Activated CD4-positive, alpha-beta T cell treated with anti-CD3 and anti-CD28 coated beads for 36 hours (primary cell): ENCODE measurements at regions of chr5 and their contacts with region 1.

Region 1: GRCh38 chr5:95961617-95962474 is at the start of gene ELL2:
- DNase-seq: peak; percentile 99
- ATAC-seq: peak; percentile 89
- H3K4me3 Mint-ChIP-seq: peak within 1 kb of the TSS; percentile 97
- H3K27ac Mint-ChIP-seq: peak within 1 kb of the TSS; percentile 96
- H3K4me1 Mint-ChIP-seq: peaks cover 51% of the 10 kb centered on the region
- H3K27me3 Mint-ChIP-seq: peaks cover 3% of the 10 kb centered on the region
- total RNA-seq, gene ELL2: 87.6 to 131 TPM

Region 2: DNA sequence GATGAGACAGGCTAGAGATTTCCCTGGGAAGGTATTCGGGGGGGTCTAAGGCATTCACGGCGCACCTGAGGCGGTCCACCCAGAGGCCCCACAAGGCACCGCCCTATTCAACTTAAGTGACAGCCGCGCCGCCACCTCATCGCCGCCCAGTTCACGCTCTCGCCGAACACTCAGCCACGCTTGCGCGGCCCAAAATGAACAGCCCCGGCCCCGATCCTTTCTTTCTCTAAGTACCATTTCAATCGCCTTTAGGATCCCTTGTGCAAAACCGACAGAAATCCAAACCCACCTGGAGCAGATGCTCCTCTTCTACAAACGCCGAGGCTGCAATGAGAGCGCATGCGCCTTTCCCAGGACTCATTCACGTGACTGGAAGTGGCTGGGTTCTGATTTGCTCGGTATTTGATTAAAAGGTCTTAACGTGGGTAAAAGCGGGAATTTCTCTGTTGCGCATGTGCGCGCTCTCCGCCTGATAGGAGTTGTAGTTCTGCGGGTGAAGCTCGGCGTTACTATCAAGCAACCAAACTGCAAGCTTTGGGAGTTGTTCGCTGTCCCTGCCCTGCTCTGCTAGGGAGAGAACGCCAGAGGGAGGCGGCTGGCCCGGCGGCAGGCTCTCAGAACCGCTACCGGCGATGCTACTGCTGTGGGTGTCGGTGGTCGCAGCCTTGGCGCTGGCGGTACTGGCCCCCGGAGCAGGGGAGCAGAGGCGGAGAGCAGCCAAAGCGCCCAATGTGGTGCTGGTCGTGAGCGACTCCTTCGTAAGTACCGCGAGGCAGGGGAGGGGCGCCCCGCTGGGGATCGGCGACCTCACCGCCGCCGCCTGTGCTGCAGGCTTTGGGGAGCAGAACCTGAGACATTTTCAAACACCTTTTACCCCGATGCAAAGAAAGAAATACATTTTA is 406.9 kb before region 1 on chr5 and contains the starts of genes ARSK and SKIC3:
- CTCF ChIA-PET with region 1: no interaction called
- POLR2A ChIA-PET with region 1: no interaction called
- intact Hi-C with region 1: loop called in 1 of 2 experiments (anchors 1 kb)
- DNase-seq: peak; percentile 92
- ATAC-seq: peak; percentile 91
- H3K4me3 Mint-ChIP-seq: peak within 1 kb of the TSS; percentile 88
- H3K27ac Mint-ChIP-seq: peak within 1 kb of the TSS; percentile 90
- H3K4me1 Mint-ChIP-seq: peaks cover 37% of the 10 kb centered on the region
- H3K27me3 Mint-ChIP-seq: no peaks in the 10 kb centered on the region
- total RNA-seq, gene ARSK: 4.6 to 5.3 TPM
- total RNA-seq, gene SKIC3: 74.6 to 75.8 TPM

Region 3: GRCh38 chr5:95870105-95870672 is 91.7 kb before region 1 on chr5:
- CTCF ChIA-PET with region 1: interaction called, 3 read pairs
- POLR2A ChIA-PET with region 1: no interaction called
- intact Hi-C with region 1: loop called (anchors 1 to 2 kb)
- DNase-seq: peak; percentile 70
- ATAC-seq: peak; percentile 78
- H3K4me3 Mint-ChIP-seq: peak overlapping the region; percentile 63
- H3K27ac Mint-ChIP-seq: peak overlapping the region; percentile 98
- H3K4me1 Mint-ChIP-seq: peaks cover 62% of the 10 kb centered on the region
- H3K27me3 Mint-ChIP-seq: no peaks in the 10 kb centered on the region

Region 4: DNA sequence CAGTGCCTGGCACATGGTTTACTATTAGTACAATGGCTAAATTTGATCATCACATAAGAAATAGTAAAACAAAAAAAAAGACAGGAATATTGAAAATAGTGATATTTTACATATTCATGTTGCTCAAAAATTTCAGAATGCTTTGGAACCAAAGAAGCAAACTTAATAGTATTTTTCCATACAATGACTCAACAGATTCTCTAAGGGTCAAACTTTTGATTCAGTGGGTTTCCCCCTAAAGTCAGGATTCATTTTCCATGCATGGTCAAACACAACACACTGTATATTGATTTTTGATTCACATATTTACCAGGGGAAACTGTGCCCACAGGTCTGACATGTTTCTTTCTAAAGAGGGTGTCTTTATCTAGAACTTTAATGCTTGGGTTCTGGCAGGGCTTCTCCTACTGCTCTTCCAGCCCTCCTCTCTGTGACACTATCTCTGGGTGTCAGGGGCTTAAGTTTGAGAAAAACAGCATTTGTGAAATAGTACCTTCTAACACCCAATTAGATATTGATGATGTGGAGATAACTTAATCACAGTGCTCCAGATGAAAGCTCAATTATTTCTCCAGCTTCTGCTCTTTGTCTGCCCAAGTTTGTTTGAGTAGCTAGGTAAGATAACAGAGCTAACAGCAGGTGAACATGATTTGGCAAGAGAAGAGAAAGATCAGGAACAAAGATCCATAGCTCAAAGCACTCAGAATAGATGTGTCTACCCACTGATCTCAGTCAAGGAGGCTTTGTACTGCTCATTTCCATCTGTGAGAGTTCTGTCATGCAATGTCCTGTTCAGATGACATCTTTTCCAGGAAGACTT is 35.3 kb after region 1 on chr5:
- CTCF ChIA-PET with region 1: no interaction called
- POLR2A ChIA-PET with region 1: no interaction called
- intact Hi-C with region 1: no loop called
- DNase-seq: no peak
- ATAC-seq: no peak
- H3K4me3 Mint-ChIP-seq: no peak overlapping the region
- H3K27ac Mint-ChIP-seq: peak overlapping the region; percentile 6
- H3K4me1 Mint-ChIP-seq: peaks cover 7% of the 10 kb centered on the region
- H3K27me3 Mint-ChIP-seq: peaks cover 7% of the 10 kb centered on the region

Region 5: DNA sequence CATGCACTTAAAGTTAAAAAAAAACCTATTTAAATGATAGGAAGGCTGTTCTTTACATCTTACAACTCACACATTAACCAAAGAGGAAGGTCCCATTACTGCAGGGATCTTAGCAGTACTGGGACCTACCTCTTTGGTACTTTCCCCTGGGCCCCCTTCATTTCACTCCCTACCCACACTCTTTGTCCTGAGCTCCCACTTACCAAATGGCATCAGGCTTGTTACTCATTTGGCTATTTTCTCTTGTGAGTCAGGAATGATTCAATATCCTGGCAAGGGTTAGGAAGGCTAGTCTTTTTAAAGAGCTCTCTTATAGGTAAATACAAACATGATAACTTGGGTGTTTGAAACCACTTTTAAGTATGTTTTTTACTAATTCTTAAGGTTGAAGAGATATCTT is 117.2 kb after region 1 on chr5:
- CTCF ChIA-PET with region 1: no interaction called
- POLR2A ChIA-PET with region 1: no interaction called
- intact Hi-C with region 1: loop called (anchors 1 kb)
- DNase-seq: peak; percentile 66
- ATAC-seq: peak; percentile 97
- H3K4me3 Mint-ChIP-seq: no peak overlapping the region
- H3K27ac Mint-ChIP-seq: peak overlapping the region; percentile 83
- H3K4me1 Mint-ChIP-seq: peaks cover 42% of the 10 kb centered on the region
- H3K27me3 Mint-ChIP-seq: peaks cover 18% of the 10 kb centered on the region

Region 6: GRCh38 chr5:96220610-96221390 is 259.0 kb after region 1 on chr5:
- CTCF ChIA-PET with region 1: no interaction called
- POLR2A ChIA-PET with region 1: no interaction called
- intact Hi-C with region 1: loop called (anchors 1 to 2 kb)
- DNase-seq: peak; percentile 43
- ATAC-seq: peak; percentile 89
- H3K4me3 Mint-ChIP-seq: no peak overlapping the region
- H3K27ac Mint-ChIP-seq: peak overlapping the region; percentile 77
- H3K4me1 Mint-ChIP-seq: peaks cover 19% of the 10 kb centered on the region
- H3K27me3 Mint-ChIP-seq: peaks cover 13% of the 10 kb centered on the region

Region 7: GRCh38 chr5:96336351-96336985 is 374.6 kb after region 1 on chr5:
- CTCF ChIA-PET with region 1: interaction called, 5 read pairs
- POLR2A ChIA-PET with region 1: no interaction called
- intact Hi-C with region 1: loop called (anchors 1 kb)
- DNase-seq: peak; percentile 74
- ATAC-seq: peak; percentile 82
- H3K4me3 Mint-ChIP-seq: no peak overlapping the region
- H3K27ac Mint-ChIP-seq: no peak overlapping the region
- H3K4me1 Mint-ChIP-seq: peaks cover 9% of the 10 kb centered on the region
- H3K27me3 Mint-ChIP-seq: peaks cover 26% of the 10 kb centered on the region

Region 8: DNA sequence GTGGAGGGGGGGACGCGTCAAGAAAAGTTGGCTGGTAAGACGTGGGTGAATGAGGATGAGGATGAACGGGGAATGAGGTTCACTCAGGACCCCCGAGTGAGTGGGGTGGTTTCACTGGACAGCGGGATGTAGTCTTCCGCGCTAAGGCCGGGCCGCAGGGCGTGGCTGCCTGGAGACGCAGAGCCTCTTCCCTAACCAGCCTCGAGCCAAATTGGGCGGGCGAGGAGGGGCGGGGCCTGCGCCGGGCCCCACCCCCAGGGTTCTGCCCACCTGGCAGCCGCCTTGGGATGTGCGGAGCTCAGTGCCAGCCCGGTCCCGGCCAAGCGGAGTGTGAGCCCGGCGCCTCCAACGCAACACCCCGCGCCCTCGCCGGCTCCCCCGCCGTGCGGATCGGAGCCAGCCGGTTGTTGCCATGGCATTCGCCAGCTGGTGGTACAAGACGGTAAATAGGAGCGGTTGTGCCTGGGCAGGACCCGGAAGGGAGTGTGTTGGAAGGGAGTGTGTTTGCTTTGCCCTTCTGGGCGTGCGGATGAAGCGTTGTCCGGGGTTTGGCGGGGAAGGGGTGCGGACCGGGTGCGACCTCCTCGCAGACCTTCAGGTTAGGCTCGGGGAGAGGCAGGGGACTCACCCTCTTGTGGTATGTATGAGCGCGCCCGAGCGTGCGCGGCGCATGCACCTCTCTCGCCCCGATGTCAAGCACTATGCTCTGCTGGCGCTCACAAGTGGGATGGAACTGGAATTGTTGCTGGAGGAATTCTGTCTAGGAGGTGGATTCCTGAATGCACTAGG is 701.1 kb after region 1 on chr5:
- CTCF ChIA-PET with region 1: no interaction called
- POLR2A ChIA-PET with region 1: no interaction called
- intact Hi-C with region 1: loop called in 1 of 2 experiments (anchors 1 kb)
- DNase-seq: peak; percentile 92
- ATAC-seq: peak; percentile 80
- H3K4me3 Mint-ChIP-seq: peak overlapping the region; percentile 89
- H3K27ac Mint-ChIP-seq: peak overlapping the region; percentile 95
- H3K4me1 Mint-ChIP-seq: peaks cover 32% of the 10 kb centered on the region
- H3K27me3 Mint-ChIP-seq: peaks cover 6% of the 10 kb centered on the region